CD4-positive, alpha-beta memory T cell (primary cell): ENCODE measurements at regions of chr14 and their contacts with region 1.

Region 1: DNA sequence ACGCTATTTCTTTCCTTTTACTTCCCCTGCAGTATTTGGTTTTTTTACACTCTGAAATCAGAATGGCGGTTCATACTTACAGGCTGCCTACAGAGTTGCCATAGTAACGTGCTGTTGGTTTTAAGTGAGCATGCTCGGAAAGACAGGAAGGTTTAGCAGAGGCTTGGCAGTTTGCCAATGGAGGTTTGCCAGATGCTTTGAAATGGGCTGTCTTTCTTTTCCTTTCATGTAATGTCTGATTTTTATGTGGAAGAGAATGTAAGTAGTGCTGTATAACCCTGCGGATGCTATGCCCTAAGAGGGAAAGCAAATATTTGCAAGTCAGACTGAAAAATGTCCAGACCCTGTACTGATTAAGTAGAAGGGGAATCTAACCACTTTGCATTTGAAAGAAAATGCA is 32.8 kb downstream of the ARID4A start:
- DNase-seq: peak; percentile 92 to 97 (median 96)
- H3K4me3 ChIP-seq: no peak overlapping the region
- H3K4me3 Mint-ChIP-seq: peak overlapping the region; percentile 49 to 78 (median 71)
- H3K27ac ChIP-seq: peak overlapping the region; percentile 55
- H3K27ac Mint-ChIP-seq: peak overlapping the region; percentile 85 to 97 (median 95)
- H3K4me1 ChIP-seq: peaks cover 21% of the 10 kb centered on the region
- H3K4me1 Mint-ChIP-seq: peaks cover 17 to 20% (median 17%) of the 10 kb centered on the region in 4 donors
- H3K27me3 ChIP-seq: no peaks in the 10 kb centered on the region
- H3K27me3 Mint-ChIP-seq: no peaks in the 10 kb centered on the region

Region 2: GRCh38 chr14:58199726-58200479 is 131.2 kb before region 1 on chr14 and contains the start of gene ACTR10:
- CTCF ChIA-PET with region 1: no interaction called
- POLR2A ChIA-PET with region 1: interaction called, 3 read pairs
- intact Hi-C with region 1: loop called (anchors 5 kb)
- DNase-seq: peak; percentile 84 to 91 (median 87)
- H3K4me3 ChIP-seq: peak within 1 kb of the TSS; percentile 64 to 75
- H3K4me3 Mint-ChIP-seq: peak within 1 kb of the TSS; percentile 94 to 97 (median 96)
- H3K27ac ChIP-seq: peak within 1 kb of the TSS; percentile 78
- H3K27ac Mint-ChIP-seq: peak within 1 kb of the TSS; percentile 94 to 99 (median 98)
- H3K4me1 ChIP-seq: peaks cover 33% of the 10 kb centered on the region
- H3K4me1 Mint-ChIP-seq: peaks cover 22 to 48% (median 34%) of the 10 kb centered on the region in 4 donors
- H3K27me3 ChIP-seq: no peaks in the 10 kb centered on the region
- H3K27me3 Mint-ChIP-seq: no peaks in the 10 kb centered on the region
- total RNA-seq, gene ACTR10: 53.7 to 54.9 TPM

Region 3: DNA sequence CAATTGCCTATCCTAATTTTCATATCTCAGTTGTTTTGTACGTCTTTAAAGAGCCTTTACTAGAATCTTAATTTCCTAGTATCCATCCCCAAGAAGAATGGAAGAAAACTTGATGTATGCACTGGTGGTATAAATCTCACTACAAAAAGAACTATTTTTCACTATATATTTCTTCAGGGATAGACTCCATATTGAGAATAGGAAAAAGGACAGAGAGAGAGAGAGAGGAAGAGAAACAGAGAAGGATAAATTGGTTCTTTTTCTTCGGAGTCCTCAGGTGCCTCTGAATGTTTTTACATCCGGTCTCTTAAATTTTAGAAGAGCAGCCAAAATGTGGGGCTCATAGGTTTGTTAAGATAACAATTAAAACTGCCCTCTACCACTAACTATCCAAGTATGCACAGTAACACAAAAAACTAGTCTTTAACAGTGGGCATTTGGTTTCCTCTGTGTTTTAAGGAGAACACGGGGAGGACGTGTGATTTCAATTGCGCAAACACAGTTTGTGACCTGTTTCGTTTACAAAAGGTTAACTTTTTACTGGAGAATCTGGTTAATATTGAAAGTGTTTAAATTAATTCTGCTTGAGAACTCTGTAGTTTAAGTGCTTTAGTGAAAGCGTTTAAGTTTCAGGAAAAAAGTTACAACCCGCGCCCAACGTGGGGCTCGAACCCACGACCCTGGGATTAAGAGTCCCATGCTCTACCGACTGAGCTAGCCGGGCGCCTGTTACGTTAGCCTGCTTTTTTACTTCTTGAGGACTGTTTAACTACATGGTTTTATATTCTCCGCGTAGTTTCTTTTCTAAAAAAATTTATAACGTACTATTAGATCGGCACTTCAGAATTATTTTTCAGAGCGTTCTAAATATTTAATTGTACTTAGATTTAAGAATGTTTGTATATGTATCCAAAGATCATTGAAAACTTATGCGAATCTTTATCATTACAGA is 91.6 kb before region 1 on chr14:
- CTCF ChIA-PET with region 1: no interaction called
- POLR2A ChIA-PET with region 1: interaction called, 3 read pairs
- intact Hi-C with region 1: loop called (anchors 1 kb)
- DNase-seq: peak; percentile 84 to 88 (median 87)
- H3K4me3 ChIP-seq: peak overlapping the region; percentile 82 to 84
- H3K4me3 Mint-ChIP-seq: no peak overlapping the region
- H3K27ac ChIP-seq: peak overlapping the region; percentile 57
- H3K27ac Mint-ChIP-seq: no peak overlapping the region
- H3K4me1 ChIP-seq: peaks cover 11% of the 10 kb centered on the region
- H3K4me1 Mint-ChIP-seq: peaks cover 17 to 23% (median 20%) of the 10 kb centered on the region in 4 donors
- H3K27me3 ChIP-seq: no peaks in the 10 kb centered on the region
- H3K27me3 Mint-ChIP-seq: peaks cover 0 to 2% of the 10 kb centered on the region in 2 donors